ENCODE measurements at regions of chr4 and their contacts with region 1.

Region 1: GRCh38 chr4:85866508-85866907 is 391.6 kb downstream of the ARHGAP24 start:
- DNase-seq: no peak
- H3K4me3 ChIP-seq: peak overlapping the region in 1 of 2 donors; percentile 31
- H3K27ac ChIP-seq: peak overlapping the region; percentile 83 to 86
- H3K4me1 ChIP-seq: peaks cover 0 to 24% of the 10 kb centered on the region in 2 donors
- H3K27me3 ChIP-seq: no peaks in the 10 kb centered on the region
- CTCF ChIP-seq: no peak

Region 2: DNA sequence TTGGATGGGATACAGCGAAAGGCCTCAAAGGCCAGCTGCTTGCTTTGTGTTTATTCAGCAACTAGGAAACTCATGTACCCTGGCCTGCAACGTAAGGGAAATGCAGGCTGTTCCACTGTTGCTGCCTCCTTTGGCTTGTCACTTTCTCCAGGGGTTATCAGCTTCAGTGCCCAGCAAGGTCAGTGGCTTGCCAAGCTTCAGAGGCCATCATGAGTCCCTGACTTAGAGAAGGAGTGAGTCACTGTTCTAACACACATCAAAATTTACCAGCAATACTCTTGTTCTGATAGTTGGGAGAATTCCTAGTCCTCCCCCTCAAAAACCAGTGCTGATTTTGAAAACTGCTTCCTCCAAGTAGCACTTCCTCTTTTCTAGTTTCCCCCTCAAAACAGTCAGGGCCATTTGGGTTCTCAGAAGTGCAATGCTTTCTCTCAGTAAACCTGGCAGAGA is 140.8 kb before region 1 on chr4:
- intact Hi-C with region 1: no loop called
- DNase-seq: peak in 1 of 2 donors; percentile 72
- H3K4me3 ChIP-seq: no peak overlapping the region
- H3K27ac ChIP-seq: peak overlapping the region; percentile 52 to 56
- H3K4me1 ChIP-seq: no peaks in the 10 kb centered on the region
- H3K27me3 ChIP-seq: no peaks in the 10 kb centered on the region
- CTCF ChIP-seq: no peak

Region 3: GRCh38 chr4:85780664-85781063 is 85.8 kb before region 1 on chr4:
- intact Hi-C with region 1: loop called (anchors 5 kb)
- DNase-seq: no peak
- H3K4me3 ChIP-seq: peak overlapping the region; percentile 28 to 60
- H3K27ac ChIP-seq: peak overlapping the region; percentile 51 to 79
- H3K4me1 ChIP-seq: peaks cover 0 to 18% of the 10 kb centered on the region in 2 donors
- H3K27me3 ChIP-seq: no peaks in the 10 kb centered on the region
- CTCF ChIP-seq: no peak

Region 4: GRCh38 chr4:85798012-85798770 is 68.3 kb before region 1 on chr4:
- intact Hi-C with region 1: loop called (anchors 5 kb)
- DNase-seq: no peak
- H3K4me3 ChIP-seq: no peak overlapping the region
- H3K27ac ChIP-seq: peak overlapping the region in 1 of 2 donors; percentile 66
- H3K4me1 ChIP-seq: peaks cover 0 to 14% of the 10 kb centered on the region in 2 donors
- H3K27me3 ChIP-seq: no peaks in the 10 kb centered on the region
- CTCF ChIP-seq: no peak

Region 5: GRCh38 chr4:85826060-85826678 is 40.3 kb before region 1 on chr4:
- intact Hi-C with region 1: loop called (anchors 5 kb)
- DNase-seq: peak in 1 of 2 donors; percentile 74
- H3K4me3 ChIP-seq: no peak overlapping the region
- H3K27ac ChIP-seq: peak overlapping the region; percentile 10 to 62
- H3K4me1 ChIP-seq: peaks cover 16 to 25% of the 10 kb centered on the region in 2 donors
- H3K27me3 ChIP-seq: no peaks in the 10 kb centered on the region
- CTCF ChIP-seq: peak in 2 of 3 experiments; percentile 37 to 40

Region 6: DNA sequence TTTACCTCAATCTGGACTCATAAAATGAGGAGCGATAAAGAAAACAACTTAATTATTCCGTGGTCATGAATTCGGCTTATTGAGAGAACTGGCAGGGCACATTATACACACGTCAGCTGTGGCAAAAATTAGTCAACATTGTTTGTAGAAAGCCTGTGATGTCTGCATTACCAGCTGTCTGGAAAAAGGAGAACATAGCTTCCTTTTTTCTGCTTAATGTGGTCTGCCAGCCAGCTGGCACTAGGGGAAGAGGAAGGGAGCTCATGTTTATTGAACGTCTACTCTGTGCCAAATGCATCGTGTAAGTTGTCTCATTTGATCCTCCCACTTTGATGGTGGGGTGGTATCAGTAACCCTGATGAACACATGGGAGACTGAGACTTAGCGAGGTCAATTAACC is 24.0 kb before region 1 on chr4:
- intact Hi-C with region 1: loop called (anchors 2 kb)
- DNase-seq: peak; percentile 53 to 90
- H3K4me3 ChIP-seq: no peak overlapping the region
- H3K27ac ChIP-seq: peak overlapping the region; percentile 76 to 84
- H3K4me1 ChIP-seq: peaks cover 4 to 21% of the 10 kb centered on the region in 2 donors
- H3K27me3 ChIP-seq: no peaks in the 10 kb centered on the region
- CTCF ChIP-seq: no peak

Region 7: GRCh38 chr4:85854546-85854945 is 12.0 kb before region 1 on chr4:
- intact Hi-C with region 1: no loop called
- DNase-seq: no peak
- H3K4me3 ChIP-seq: no peak overlapping the region
- H3K27ac ChIP-seq: peak overlapping the region; percentile 34 to 68
- H3K4me1 ChIP-seq: peaks cover 0 to 6% of the 10 kb centered on the region in 2 donors
- H3K27me3 ChIP-seq: no peaks in the 10 kb centered on the region
- CTCF ChIP-seq: no peak

Region 8: GRCh38 chr4:85955620-85956292 is 89.2 kb after region 1 on chr4:
- intact Hi-C with region 1: loop called (anchors 5 kb)
- DNase-seq: no peak
- H3K4me3 ChIP-seq: no peak overlapping the region
- H3K27ac ChIP-seq: no peak overlapping the region
- H3K4me1 ChIP-seq: no peaks in the 10 kb centered on the region
- H3K27me3 ChIP-seq: no peaks in the 10 kb centered on the region
- CTCF ChIP-seq: no peak